MCF 10A (cell line): ENCODE measurements at regions of chr3 and their contacts with region 1.

Region 1: DNA sequence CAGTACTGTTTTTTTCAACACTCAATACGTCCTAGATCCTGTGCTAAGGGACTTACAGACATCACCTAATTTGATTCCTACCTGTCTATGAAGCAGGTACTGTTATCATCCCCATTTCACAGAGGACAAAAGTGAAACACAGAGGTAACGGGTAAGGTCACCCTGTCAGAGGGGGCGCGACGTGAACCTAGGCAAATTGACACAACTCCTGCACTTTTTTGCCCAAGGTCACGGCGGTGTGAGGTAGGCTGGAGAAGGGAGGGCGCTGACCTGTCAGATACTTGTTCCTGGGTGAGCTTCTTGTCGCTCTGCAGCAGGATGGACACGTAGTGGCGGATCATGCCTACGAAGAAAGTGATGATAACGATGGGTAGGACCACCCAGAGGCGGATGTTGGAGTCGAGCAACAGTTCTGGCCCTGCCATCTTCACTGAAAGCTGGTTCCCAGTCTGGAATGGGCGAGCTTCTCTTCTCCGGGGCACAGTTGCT is 360 bp downstream of the EMC3 start:
- DNase-seq: no peak
- H3K4me3 Mint-ChIP-seq: peak overlapping the region; percentile 94
- H3K27ac Mint-ChIP-seq: peak overlapping the region; percentile 96
- H3K4me1 Mint-ChIP-seq: peaks cover 15% of the 10 kb centered on the region
- H3K27me3 Mint-ChIP-seq: no peaks in the 10 kb centered on the region
- CTCF ChIP-seq: no peak

Region 2: DNA sequence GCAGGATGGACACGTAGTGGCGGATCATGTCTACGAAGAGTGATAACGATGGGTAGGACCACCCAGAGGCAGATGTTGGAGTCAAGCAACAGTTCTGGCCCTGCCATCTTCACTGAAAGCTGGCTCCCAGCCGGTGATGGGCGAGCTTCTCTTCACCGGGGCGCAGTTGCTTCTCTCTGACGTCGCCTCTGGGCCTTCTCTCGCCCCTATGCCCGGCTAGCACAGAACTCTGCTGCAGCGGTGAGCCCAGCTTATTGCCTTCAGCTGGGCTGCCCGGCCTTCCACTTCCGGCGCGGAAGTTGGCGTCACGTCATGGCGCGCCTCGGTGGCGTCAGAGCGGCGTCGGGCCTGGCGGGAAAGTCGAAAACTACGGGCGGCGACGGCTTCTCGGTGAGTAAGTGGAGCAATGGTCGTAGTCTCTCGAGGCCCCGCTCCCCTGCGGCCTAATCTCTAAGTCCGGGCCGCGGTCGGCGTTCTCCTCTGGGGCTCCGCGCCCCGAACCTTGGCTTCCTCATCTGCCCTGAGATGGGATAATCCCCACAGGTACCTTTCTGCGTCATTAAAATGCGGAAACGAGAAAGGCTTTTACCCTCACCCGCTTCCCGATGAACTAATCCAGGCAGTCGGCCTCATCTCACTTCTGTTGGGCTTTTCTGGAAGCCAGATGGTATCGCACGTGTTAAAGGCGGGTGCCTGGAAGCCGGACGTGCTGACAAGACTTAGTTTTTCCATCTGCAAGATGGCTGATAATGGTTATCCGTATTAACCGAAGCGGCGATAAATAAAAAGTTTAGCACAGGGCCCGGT is 40.0 kb after region 1 on chr3 and contains the start of gene FANCD2:
- CTCF ChIA-PET with region 1: no interaction called
- POLR2A ChIA-PET with region 1: interaction called, 21 read pairs
- intact Hi-C with region 1: loop called (anchors 5 kb)
- DNase-seq: peak; percentile 85
- H3K4me3 Mint-ChIP-seq: peak within 1 kb of the TSS; percentile 88
- H3K27ac Mint-ChIP-seq: peak within 1 kb of the TSS; percentile 87
- H3K4me1 Mint-ChIP-seq: peaks cover 11% of the 10 kb centered on the region
- H3K27me3 Mint-ChIP-seq: no peaks in the 10 kb centered on the region
- CTCF ChIP-seq: no peak
- total RNA-seq, gene FANCD2: 14.6 and 24.6 TPM in 2 replicates